ENCODE measurements at regions of chr19 and their contacts with region 1.

Region 1: DNA sequence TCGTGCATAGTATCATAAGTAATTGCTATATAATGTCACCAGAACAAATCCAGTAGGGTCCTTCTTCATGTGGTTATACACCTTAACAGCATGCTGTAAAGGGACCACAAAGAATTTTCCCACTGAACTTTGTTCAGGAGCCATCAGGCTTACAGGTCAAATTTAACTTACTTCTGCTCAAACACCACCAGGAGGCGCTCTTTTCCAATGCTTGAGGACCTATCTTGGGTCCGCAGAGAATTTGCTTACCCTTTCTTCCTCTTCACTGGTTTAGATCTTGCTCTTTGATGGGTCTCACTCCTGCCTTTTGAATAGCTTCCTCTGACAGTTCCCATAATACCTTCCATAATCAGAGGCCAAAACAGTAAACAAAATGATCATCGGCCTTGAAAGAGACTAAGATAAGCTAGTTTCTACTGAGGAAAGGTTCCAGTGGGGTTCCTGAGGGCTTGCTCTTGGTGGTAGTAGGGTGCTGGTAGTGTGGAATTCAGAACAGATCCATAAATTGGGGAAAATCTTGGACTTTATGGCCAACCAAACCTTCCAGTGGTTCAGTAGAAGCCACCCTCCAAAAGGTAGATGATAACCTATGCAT is 37.4 kb downstream of the SCGB2B2 start:
- DNase-seq: peak; percentile 71
- H3K4me3 Mint-ChIP-seq: no peak overlapping the region
- H3K27ac Mint-ChIP-seq: no peak overlapping the region
- H3K4me1 Mint-ChIP-seq: no peaks in the 10 kb centered on the region
- H3K27me3 Mint-ChIP-seq: no peaks in the 10 kb centered on the region

Region 2: GRCh38 chr19:34501339-34502320 is 138.0 kb before region 1 on chr19:
- CTCF ChIA-PET with region 1: no interaction called
- DNase-seq: peak; percentile 90
- H3K4me3 Mint-ChIP-seq: no peak overlapping the region
- H3K27ac Mint-ChIP-seq: no peak overlapping the region
- H3K4me1 Mint-ChIP-seq: peaks cover 10% of the 10 kb centered on the region
- H3K27me3 Mint-ChIP-seq: peaks cover 51% of the 10 kb centered on the region

Region 3: DNA sequence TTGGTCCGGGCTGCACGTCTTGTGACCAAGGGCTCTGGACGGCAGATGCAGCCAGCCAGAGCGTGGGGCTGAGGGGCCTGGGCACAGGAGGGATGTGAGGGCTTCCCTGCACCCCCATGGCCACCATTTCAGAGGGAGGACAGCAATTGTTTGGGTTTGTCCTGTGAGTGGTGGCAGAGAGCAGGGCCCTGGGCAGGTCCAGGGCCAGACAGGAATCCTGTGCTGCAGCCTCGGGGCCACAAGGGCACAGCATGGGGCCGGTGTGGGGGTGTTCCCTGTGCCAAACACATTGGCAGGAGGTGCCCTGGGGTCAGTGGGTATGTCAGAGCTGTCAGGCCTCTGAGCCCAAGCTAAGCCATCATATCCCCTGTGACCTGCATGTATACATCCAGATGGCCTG is 125.8 kb before region 1 on chr19:
- CTCF ChIA-PET with region 1: no interaction called
- DNase-seq: no peak
- H3K4me3 Mint-ChIP-seq: no peak overlapping the region
- H3K27ac Mint-ChIP-seq: no peak overlapping the region
- H3K4me1 Mint-ChIP-seq: no peaks in the 10 kb centered on the region
- H3K27me3 Mint-ChIP-seq: peaks cover 13% of the 10 kb centered on the region

Region 4: GRCh38 chr19:34712395-34713261 is 73.0 kb after region 1 on chr19:
- CTCF ChIA-PET with region 1: interaction called, 18 read pairs
- DNase-seq: peak; percentile 65
- H3K4me3 Mint-ChIP-seq: no peak overlapping the region
- H3K27ac Mint-ChIP-seq: no peak overlapping the region
- H3K4me1 Mint-ChIP-seq: no peaks in the 10 kb centered on the region
- H3K27me3 Mint-ChIP-seq: peaks cover 7% of the 10 kb centered on the region